ENCODE measurements at regions of chr3 and their contacts with region 1.

Region 1: DNA sequence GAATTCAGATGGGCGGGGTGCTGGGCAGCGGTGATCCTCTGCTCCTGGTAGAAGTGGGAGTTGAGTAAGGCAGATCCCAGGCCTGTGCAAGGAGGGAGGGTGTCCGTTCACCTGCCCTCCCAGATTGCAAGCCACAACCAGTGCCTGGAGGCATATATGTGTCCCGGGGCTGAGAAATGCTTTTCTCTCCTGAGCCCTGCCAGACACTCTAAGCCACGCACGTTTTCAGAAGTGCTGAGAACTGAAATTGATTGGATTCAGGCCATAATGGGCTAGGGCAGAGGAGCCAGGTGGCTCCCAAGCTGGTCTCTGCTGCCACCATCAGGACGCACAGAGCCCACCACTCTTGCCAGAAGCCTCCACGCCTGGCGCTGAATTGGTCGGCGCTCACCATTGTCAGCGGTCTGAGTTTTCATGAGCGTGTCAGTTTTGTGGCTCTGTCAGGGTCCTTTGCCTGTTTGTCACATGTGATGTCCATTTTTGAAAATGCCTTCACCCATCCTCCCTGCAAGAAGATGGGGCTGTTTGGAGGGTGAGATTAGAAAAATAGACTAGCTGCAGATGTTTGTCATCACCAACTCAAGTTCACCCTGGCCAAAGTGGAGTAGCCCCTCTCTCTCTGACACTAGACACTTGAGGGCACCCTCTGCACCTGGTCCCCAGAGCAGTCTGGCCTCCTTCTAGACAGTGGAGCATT is 15.4 kb upstream of the BFSP2 start:
- DNase-seq: peak; percentile 50
- H3K4me3 ChIP-seq: no peak overlapping the region
- H3K27ac ChIP-seq: no peak overlapping the region
- H3K4me1 ChIP-seq: peaks cover 8% of the 10 kb centered on the region
- CTCF ChIP-seq: peak; percentile 83

Region 2: GRCh38 chr3:133040696-133041523 is 343.6 kb before region 1 on chr3:
- CTCF ChIA-PET with region 1: no interaction called
- POLR2A ChIA-PET with region 1: no interaction called
- intact Hi-C with region 1: loop called (anchors 5 kb)
- DNase-seq: peak; percentile 62
- H3K4me3 ChIP-seq: no peak overlapping the region
- H3K27ac ChIP-seq: no peak overlapping the region
- H3K4me1 ChIP-seq: no peaks in the 10 kb centered on the region
- CTCF ChIP-seq: peak; percentile 84

Region 3: GRCh38 chr3:133426721-133427120 is 42.2 kb after region 1 on chr3:
- CTCF ChIA-PET with region 1: no interaction called
- POLR2A ChIA-PET with region 1: interaction called, 3 read pairs
- intact Hi-C with region 1: loop called (anchors 5 kb)
- DNase-seq: no peak
- H3K4me3 ChIP-seq: no peak overlapping the region
- H3K27ac ChIP-seq: no peak overlapping the region
- H3K4me1 ChIP-seq: peaks cover 4% of the 10 kb centered on the region
- CTCF ChIP-seq: no peak

Measured in OCI-LY7 (cell line).